ENCODE measurements at regions of chr9 and their contacts with region 1.

Region 1: DNA sequence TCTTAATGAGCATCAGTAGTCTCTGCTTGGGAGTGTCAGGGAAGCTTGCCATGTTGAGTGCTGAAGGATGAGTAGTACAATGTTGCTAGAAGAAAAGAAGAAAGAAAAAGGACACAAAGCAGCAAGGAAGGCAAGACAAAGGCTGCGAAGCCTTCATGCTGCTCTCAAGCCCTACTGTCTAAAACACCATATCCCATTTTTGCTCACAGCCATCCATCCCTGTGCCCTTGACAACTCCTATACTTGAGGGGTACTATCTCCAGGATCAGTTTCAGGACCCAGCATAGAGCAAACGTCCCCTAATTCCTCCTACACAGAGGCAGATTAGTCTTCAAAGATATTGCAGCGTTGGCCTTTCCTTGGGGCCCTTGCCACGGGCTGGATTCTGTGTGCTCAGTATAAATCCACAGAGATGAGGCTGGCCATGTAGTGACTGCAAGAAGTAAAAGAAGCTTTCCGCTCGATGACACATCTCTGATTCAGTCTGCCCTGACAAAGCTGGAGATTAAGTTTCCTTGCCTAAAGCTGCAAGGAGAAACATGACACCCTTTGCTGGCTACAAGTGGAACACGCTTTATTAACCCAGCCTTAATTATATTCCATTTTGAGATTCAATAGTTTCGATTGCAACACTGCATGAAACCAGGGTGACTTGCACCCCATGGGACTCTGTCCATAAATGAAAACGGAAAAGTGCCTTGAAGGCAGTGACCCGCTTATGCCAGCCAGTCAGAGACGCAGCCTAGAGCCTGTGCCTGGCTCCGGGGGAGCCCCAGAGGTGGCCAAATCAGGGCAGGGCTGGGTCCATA is 304.6 kb downstream of the ACTL7B start:
- DNase-seq: peak; percentile 98
- H3K4me3 ChIP-seq: peak overlapping the region in 1 of 3 experiments; percentile 9
- H3K27ac ChIP-seq: peak overlapping the region; percentile 99
- H3K4me1 ChIP-seq: peaks cover 60% of the 10 kb centered on the region
- H3K27me3 ChIP-seq: no peaks in the 10 kb centered on the region
- CTCF ChIP-seq: peak in 1 of 2 donors; percentile 10

Region 2: DNA sequence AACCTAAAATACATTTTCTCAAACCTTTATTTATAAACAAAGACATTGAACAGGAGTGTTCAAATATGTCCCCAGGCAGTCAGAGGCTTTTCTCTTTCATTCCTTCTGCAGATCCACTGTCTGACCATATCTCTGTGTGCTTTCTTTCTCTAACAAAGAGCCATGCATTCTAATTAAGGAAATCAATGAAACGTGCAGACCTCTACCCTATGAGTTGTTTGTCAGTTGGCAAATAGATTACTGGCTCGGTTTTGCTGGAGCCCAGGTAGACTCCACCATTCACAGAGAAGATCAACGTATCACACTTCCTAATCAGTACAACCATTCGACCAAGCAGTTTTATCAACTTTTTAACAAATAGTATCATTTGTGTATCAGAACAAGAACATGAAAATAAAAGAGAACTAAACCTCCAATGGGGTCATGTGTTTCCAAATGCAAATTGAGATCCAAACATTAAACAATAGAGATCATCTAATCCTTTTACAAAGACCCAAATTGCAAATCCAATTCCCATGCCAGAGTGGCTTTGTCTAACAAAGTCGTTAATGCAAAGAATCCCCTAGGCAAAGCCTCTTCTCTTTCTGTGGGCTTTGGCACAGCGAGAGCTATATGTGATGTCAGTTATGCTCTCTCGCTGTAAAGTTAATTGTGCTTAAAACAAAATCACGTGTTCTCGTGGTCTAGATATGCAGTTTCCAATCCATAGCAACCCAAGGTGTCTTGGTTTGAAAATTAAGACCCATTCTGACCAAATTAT is 1078.5 kb before region 1 on chr9:
- CTCF ChIA-PET with region 1: no interaction called
- dilution Hi-C with region 1: no loop called
- in situ Hi-C with region 1: loop called in 1 of 2 experiments (anchors 5 kb)
- intact Hi-C with region 1: no loop called
- DNase-seq: no peak
- H3K4me3 ChIP-seq: no peak overlapping the region
- H3K27ac ChIP-seq: no peak overlapping the region
- H3K4me1 ChIP-seq: no peaks in the 10 kb centered on the region
- H3K27me3 ChIP-seq: no peaks in the 10 kb centered on the region
- CTCF ChIP-seq: no peak

Region 3: GRCh38 chr9:108456903-108457302 is 94.3 kb before region 1 on chr9:
- CTCF ChIA-PET with region 1: no interaction called
- dilution Hi-C with region 1: loop called (anchors 5 kb)
- in situ Hi-C with region 1: no loop called
- intact Hi-C with region 1: no loop called
- DNase-seq: no peak
- H3K4me3 ChIP-seq: no peak overlapping the region
- H3K27ac ChIP-seq: no peak overlapping the region
- H3K4me1 ChIP-seq: no peaks in the 10 kb centered on the region
- H3K27me3 ChIP-seq: no peaks in the 10 kb centered on the region
- CTCF ChIP-seq: no peak

Measured in mammary epithelial cell (primary cell).